ENCODE measurements at regions of chr13 and their contacts with region 1.

Region 1: DNA sequence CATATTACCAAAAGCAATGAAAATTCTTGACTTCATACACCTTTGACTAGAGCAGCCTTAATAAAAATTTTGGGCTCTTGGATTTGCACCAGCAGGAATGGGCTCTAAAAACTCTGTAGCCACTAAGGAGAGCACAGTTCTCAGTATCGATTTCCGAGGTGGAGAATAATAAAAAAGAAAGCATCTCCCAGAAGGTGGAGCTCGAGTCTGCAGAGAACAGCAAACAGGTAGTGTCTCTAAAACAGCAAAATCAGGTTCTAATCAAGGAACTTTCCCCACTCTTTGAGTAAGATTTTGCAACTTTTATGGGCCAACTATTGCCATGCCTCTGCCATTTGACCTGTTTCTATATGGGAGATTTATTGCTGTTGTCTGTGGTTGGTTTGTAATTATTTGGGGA is 258.7 kb upstream of the GPC6 start:
- DNase-seq: peak; percentile 40
- ATAC-seq: peak; percentile 38; the same call in 1 of the 2 replicates
- H3K4me3 ChIP-seq: no peak overlapping the region
- H3K27ac ChIP-seq: no peak overlapping the region
- H3K4me1 ChIP-seq: no peaks in the 10 kb centered on the region
- H3K27me3 ChIP-seq: no peaks in the 10 kb centered on the region
- CTCF ChIP-seq: peak; percentile 56

Region 2: GRCh38 chr13:93227878-93228642 is 260.1 kb after region 1 on chr13:
- CTCF ChIA-PET with region 1: no interaction called
- POLR2A ChIA-PET with region 1: no interaction called
- intact Hi-C with region 1: loop called (anchors 1 kb)
- DNase-seq: peak; percentile 64
- ATAC-seq: peak; percentile 65
- H3K4me3 ChIP-seq: peak overlapping the region; percentile 88
- H3K27ac ChIP-seq: no peak overlapping the region
- H3K4me1 ChIP-seq: peaks cover 43% of the 10 kb centered on the region
- H3K27me3 ChIP-seq: no peaks in the 10 kb centered on the region
- CTCF ChIP-seq: peak; percentile 37; the same call in 1 of the 2 replicates